Colonic mucosa (tissue), 4 donors: ENCODE measurements at regions of chr10 and their contacts with region 1.

Region 1: GRCh38 chr10:47311932-47312662 is 10.2 kb upstream of the GDF2 start:
- DNase-seq: peak; percentile 87
- H3K4me3 ChIP-seq: no peak overlapping the region
- H3K27ac ChIP-seq: no peak overlapping the region
- H3K4me1 ChIP-seq: no peaks in the 10 kb centered on the region
- H3K27me3 ChIP-seq: no peaks in the 10 kb centered on the region
- CTCF ChIP-seq: peak; percentile 81

Region 2: GRCh38 chr10:47024399-47025252 is 287.5 kb before region 1 on chr10:
- intact Hi-C with region 1: loop called (anchors 5 kb)
- DNase-seq: peak; percentile 65
- H3K4me3 ChIP-seq: no peak overlapping the region
- H3K27ac ChIP-seq: no peak overlapping the region
- H3K4me1 ChIP-seq: no peaks in the 10 kb centered on the region
- H3K27me3 ChIP-seq: no peaks in the 10 kb centered on the region
- CTCF ChIP-seq: peak; percentile 81

Region 3: DNA sequence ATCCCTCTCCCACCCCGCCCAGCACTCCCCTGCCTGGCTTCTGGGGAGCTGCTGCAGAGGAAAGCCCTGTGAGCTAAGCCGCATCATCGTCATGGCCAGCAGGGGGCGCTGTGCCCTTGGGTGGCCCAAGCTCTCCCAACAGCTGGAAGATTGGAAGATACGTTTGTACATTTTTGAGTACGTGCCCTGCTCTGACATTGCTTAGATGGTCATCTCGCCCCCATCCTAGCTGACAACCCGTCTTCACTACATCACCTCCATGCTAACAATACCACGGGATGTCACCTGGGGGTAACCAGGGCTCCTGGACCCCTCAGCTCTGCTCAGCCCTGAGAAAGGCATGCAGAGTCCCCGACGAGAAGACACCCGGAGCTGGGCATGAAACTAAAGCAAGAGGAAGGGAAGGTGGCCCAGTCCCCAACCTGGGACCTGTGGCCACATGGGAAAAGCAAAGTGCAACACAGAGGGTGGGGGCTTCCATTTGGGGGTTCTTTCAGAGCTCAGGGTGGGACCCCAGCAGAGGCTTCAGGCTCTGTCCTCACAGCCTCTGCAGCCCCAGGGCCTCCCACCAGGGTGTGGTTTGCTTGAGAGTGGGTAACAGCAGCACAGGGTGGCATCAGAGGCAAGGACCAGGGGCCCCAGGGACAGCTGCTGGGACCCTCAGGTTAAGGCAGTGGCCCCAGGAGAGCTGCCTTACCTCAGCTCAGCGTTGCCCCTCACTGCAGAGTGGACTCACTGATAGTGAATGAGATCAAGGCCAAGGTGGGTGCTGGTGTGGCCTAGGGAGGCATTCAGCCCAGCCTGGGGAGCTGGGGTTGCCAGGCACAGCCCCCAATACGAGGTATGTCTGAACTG is 264.2 kb before region 1 on chr10:
- intact Hi-C with region 1: loop called (anchors 2 kb)
- DNase-seq: peak; percentile 81
- H3K4me3 ChIP-seq: no peak overlapping the region
- H3K27ac ChIP-seq: no peak overlapping the region
- H3K4me1 ChIP-seq: no peaks in the 10 kb centered on the region
- H3K27me3 ChIP-seq: no peaks in the 10 kb centered on the region
- CTCF ChIP-seq: peak; percentile 95